ENCODE measurements at regions of chr2 and their contacts with region 1.

Region 1: GRCh38 chr2:230847883-230848388 is 16.8 kb upstream of the ITM2C start:
- DNase-seq: peak; percentile 86
- H3K4me3 Mint-ChIP-seq: no peak overlapping the region
- H3K27ac Mint-ChIP-seq: no peak overlapping the region
- H3K4me1 Mint-ChIP-seq: peaks cover 9% of the 10 kb centered on the region
- H3K27me3 Mint-ChIP-seq: peaks cover 41% of the 10 kb centered on the region

Region 2: DNA sequence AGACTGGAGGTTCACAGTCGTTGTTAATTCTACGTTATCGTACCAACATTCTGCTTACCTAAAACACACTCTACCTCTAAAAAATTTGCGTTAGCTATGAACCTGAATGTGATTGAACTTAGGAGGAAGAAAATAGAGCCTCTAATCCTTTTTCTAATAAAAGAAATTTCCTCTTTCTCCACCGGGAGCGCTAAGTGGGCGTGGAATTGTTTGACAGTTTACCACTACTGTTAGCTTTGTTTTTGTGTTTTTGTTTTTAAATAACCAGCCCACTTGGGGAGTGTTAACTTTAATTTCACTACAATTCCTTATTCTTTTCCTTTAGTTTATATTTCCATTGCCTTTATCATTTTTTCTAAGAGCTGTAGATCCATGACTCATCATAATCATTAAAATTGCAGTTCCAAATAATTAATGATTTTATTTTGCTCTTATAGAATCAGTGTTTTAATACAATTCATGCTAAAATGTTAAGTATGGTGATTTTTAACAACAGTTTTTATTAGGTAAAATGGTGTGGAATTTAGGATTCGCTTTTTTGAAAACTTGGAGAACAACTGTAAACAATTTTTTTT is 38.2 kb before region 1 on chr2:
- CTCF ChIA-PET with region 1: no interaction called
- POLR2A ChIA-PET with region 1: no interaction called
- DNase-seq: no peak
- H3K4me3 Mint-ChIP-seq: no peak overlapping the region
- H3K27ac Mint-ChIP-seq: peak overlapping the region; percentile 4
- H3K4me1 Mint-ChIP-seq: peaks cover 12% of the 10 kb centered on the region
- H3K27me3 Mint-ChIP-seq: no peaks in the 10 kb centered on the region

Region 3: DNA sequence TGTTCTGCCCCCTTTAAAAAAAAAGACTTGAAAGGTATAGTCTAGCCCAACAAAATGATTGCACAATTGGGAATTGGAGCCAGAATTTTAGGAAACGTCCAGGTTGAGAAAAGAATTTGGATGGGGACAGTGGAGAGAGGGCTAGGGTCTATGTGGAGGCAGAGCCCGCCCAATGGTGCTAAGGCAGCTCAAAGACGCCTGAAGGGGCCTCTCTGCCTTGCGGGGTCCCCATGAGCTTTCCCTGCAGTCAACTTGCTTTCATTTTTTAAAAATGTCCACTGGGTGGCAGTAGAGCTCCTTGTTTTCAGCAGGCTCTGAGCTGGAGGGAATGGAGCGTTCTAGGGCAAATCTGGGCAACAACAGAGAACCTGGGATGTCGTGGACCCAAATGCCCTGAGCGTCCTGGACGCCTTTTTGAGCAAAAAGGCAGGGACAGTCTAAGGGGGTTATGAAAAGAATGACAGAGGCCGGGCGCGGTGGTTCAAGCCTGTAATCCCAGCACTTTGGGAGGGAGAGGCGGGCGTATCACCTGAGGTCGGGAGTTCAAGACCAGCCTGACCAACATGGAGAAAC is 23.4 kb before region 1 on chr2:
- CTCF ChIA-PET with region 1: interaction called, 10 read pairs
- POLR2A ChIA-PET with region 1: no interaction called
- DNase-seq: peak; percentile 76
- H3K4me3 Mint-ChIP-seq: peak overlapping the region; percentile 11
- H3K27ac Mint-ChIP-seq: no peak overlapping the region
- H3K4me1 Mint-ChIP-seq: peaks cover 23% of the 10 kb centered on the region
- H3K27me3 Mint-ChIP-seq: peaks cover 34% of the 10 kb centered on the region

Region 4: GRCh38 chr2:230873476-230874451 is 25.8 kb after region 1 on chr2:
- CTCF ChIA-PET with region 1: no interaction called
- POLR2A ChIA-PET with region 1: no interaction called
- DNase-seq: peak; percentile 6
- H3K4me3 Mint-ChIP-seq: no peak overlapping the region
- H3K27ac Mint-ChIP-seq: peak overlapping the region; percentile 54
- H3K4me1 Mint-ChIP-seq: peaks cover 42% of the 10 kb centered on the region
- H3K27me3 Mint-ChIP-seq: no peaks in the 10 kb centered on the region

Measured in activated CD4-positive, alpha-beta T cell treated with anti-CD3 and anti-CD28 coated beads, Interleukin-2, amount 10 ng/mL, durations not matched to agents 7 days and 5 days (primary cell).